ENCODE measurements at regions of chr19 and their contacts with region 1.

Region 1: DNA sequence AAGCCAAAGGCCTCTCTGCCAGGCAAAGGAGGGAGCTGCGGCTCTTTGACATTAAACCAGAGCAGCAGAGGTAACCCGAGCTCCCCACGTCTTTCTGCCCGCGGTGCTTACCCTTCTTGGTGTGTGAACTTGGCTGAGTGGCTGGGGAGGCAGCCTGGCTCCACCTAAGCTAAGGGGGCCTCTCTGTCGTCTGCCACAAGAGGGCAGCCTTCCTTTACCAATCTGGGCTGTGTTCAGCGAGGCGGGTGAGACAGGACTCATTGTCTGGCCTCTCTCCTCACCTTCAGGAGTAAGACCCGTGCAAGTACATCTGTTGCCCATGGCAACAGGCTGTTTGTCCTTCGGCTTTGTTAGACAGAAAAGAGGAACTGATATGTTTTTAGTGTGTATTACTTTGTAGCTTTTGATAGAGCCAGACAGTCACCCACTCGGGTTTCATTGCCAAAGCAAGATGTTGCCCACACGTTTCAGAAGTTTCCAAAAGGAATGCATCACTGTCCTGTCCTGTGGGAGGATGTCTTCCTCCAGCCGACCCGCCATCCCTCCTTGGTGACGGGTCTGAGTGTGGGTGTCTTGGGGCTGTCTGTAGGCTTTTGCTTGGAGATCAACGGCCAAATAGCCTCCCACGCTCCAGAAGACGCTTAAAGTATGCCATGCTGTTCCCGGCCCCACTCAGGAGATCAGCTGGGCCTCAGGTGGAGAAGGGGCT is 4.6 kb downstream of the POP4 start:
- DNase-seq: peak; percentile 87 to 91
- ATAC-seq: peak; percentile 88
- H3K4me3 ChIP-seq: no peak overlapping the region
- H3K27ac ChIP-seq: no peak overlapping the region
- H3K4me1 ChIP-seq: no peaks in the 10 kb centered on the region
- H3K27me3 ChIP-seq: no peaks in the 10 kb centered on the region

Region 2: DNA sequence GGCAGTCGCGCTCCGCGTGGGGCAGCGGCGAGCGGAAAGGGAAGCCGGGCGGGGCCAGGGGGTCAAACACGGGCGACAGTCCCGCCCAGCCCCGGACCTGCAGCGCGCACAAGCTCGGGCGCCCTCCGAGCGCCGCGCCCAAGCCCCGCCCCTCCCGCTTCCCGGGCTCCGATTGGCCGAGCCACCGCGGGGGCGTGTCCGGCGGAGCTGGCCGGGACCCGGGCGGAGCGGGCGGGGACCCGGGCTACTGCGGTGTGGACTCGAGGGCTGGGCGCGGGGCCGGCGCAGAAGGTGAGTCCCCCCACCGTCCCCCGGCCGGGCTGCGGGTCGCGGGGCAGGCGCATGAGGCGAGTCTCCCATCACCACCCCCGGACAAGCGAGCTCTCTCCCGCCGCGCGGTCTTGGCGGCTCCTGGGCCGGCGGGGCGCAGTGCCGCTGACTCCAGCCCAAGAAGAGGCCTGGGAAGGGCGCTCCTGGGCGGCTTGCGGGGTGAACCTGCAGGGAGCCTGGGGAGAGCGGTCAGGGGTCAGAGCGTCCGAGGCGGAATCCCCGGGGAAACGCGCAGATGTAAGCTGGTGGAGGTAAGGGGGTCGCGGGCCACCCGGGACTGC is 54.6 kb after region 1 on chr19 and contains the start of gene PLEKHF1:
- intact Hi-C with region 1: loop called (anchors 2 to 5 kb)
- DNase-seq: peak; percentile 94 to 96
- ATAC-seq: peak; percentile 93
- H3K4me3 ChIP-seq: peak within 1 kb of the TSS; percentile 57 to 80
- H3K27ac ChIP-seq: peak within 1 kb of the TSS; percentile 60 to 92
- H3K4me1 ChIP-seq: peaks cover 0 to 2% of the 10 kb centered on the region in 2 donors
- H3K27me3 ChIP-seq: no peaks in the 10 kb centered on the region
- total RNA-seq, gene PLEKHF1: 10.8 to 17.5 TPM

Region 3: GRCh38 chr19:29694669-29695627 is 84.2 kb after region 1 on chr19:
- intact Hi-C with region 1: loop called in 1 of 2 experiments (anchors 2 kb)
- DNase-seq: peak; percentile 86 to 94
- ATAC-seq: peak; percentile 93
- H3K4me3 ChIP-seq: no peak overlapping the region
- H3K27ac ChIP-seq: no peak overlapping the region
- H3K4me1 ChIP-seq: no peaks in the 10 kb centered on the region
- H3K27me3 ChIP-seq: no peaks in the 10 kb centered on the region

Region 4: GRCh38 chr19:29896802-29897201 is 286.1 kb after region 1 on chr19:
- intact Hi-C with region 1: no loop called
- DNase-seq: no peak
- ATAC-seq: no peak
- H3K4me3 ChIP-seq: no peak overlapping the region
- H3K27ac ChIP-seq: no peak overlapping the region
- H3K4me1 ChIP-seq: no peaks in the 10 kb centered on the region
- H3K27me3 ChIP-seq: no peaks in the 10 kb centered on the region